ENCODE measurements at regions of chr9 and their contacts with region 1.

Region 1: GRCh38 chr9:34869390-34869789 is 88.7 kb upstream of the PHF24 start:
- DNase-seq: no peak
- ATAC-seq: no peak
- H3K4me3 ChIP-seq: no peak overlapping the region
- H3K27ac ChIP-seq: no peak overlapping the region
- H3K4me1 ChIP-seq: no peaks in the 10 kb centered on the region
- H3K27me3 ChIP-seq: no peaks in the 10 kb centered on the region

Region 2: DNA sequence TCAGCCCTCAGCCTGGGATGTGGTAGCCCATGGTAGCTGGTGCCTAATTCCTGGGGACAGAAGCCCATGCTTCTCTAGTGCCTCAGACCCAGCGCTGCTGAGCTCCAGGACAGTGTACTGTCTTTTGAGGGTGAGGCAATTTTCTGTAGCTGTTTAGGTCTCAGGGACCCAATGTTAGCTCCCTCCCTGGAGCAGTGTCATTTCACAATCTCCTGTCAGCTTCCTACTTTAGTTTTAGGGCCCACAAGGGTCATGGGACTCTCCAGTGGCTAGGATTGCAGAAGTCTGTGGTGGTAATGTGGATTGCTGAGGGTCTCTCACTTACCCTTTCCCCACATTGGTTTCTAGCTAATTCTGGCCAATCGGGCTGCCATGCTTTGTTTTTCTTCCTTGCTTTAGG is 91.7 kb before region 1 on chr9:
- intact Hi-C with region 1: loop called in 1 of 2 experiments (anchors 10 kb)
- DNase-seq: no peak
- ATAC-seq: no peak
- H3K4me3 ChIP-seq: no peak overlapping the region
- H3K27ac ChIP-seq: no peak overlapping the region
- H3K4me1 ChIP-seq: no peaks in the 10 kb centered on the region
- H3K27me3 ChIP-seq: no peaks in the 10 kb centered on the region

Region 3: GRCh38 chr9:34796924-34797323 is 72.5 kb before region 1 on chr9:
- intact Hi-C with region 1: no loop called
- DNase-seq: no peak
- ATAC-seq: no peak
- H3K4me3 ChIP-seq: no peak overlapping the region
- H3K27ac ChIP-seq: no peak overlapping the region
- H3K4me1 ChIP-seq: no peaks in the 10 kb centered on the region
- H3K27me3 ChIP-seq: no peaks in the 10 kb centered on the region

Region 4: GRCh38 chr9:34927061-34927460 is 57.7 kb after region 1 on chr9:
- intact Hi-C with region 1: no loop called
- DNase-seq: no peak
- ATAC-seq: no peak
- H3K4me3 ChIP-seq: no peak overlapping the region
- H3K27ac ChIP-seq: no peak overlapping the region
- H3K4me1 ChIP-seq: no peaks in the 10 kb centered on the region
- H3K27me3 ChIP-seq: peaks cover 0 to 2% of the 10 kb centered on the region in 2 donors

Measured in aorta (tissue), 5 donors.